Endothelial cell of umbilical vein (primary cell): ENCODE measurements at regions of chr16 and their contacts with region 1.

Region 1: GRCh38 chr16:48385272-48386150 is at the start of gene SIAH1:
- DNase-seq: peak; percentile 81
- H3K4me3 ChIP-seq: peak within 1 kb of the TSS; percentile 64 to 99 (median 92)
- H3K27ac ChIP-seq: peak within 1 kb of the TSS; percentile 92
- H3K4me1 ChIP-seq: peaks cover 18% of the 10 kb centered on the region
- H3K27me3 ChIP-seq: no peaks in the 10 kb centered on the region
- CTCF ChIP-seq: no peak
- POLR2A ChIP-seq: peak; percentile 77
- total RNA-seq, gene SIAH1: 19.9 and 21.3 TPM in 2 replicates

Region 2: GRCh38 chr16:48318630-48319029 is 66.9 kb before region 1 on chr16:
- CTCF ChIA-PET with region 1: no interaction called
- POLR2A ChIA-PET with region 1: no interaction called
- dilution Hi-C with region 1: no loop called
- intact Hi-C with region 1: loop called (anchors 2 kb)
- DNase-seq: peak; percentile 86
- H3K4me3 ChIP-seq: no peak overlapping the region
- H3K27ac ChIP-seq: peak overlapping the region; percentile 15
- H3K4me1 ChIP-seq: peaks cover 22% of the 10 kb centered on the region
- H3K27me3 ChIP-seq: no peaks in the 10 kb centered on the region
- CTCF ChIP-seq: no peak
- POLR2A ChIP-seq: no peak

Region 3: DNA sequence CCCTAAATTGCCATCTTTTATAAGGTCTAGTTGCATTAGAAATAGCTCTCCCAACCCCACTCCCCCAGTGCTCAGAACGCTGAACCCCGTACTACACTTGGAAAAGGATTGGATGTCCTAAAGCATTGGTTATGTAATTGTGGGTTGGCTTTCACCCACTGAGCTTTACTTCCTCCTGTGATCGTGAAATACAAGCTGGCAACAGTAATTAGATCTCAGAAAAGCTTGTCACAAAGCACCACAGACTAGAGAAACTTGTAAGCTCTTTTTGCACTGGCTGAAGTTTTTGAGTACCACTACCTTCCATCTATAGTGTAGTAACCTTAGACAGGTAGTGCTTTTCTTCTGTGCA is 54.7 kb before region 1 on chr16:
- CTCF ChIA-PET with region 1: no interaction called
- POLR2A ChIA-PET with region 1: no interaction called
- dilution Hi-C with region 1: no loop called
- intact Hi-C with region 1: no loop called
- DNase-seq: no peak
- H3K4me3 ChIP-seq: no peak overlapping the region
- H3K27ac ChIP-seq: no peak overlapping the region
- H3K4me1 ChIP-seq: peaks cover 2% of the 10 kb centered on the region
- H3K27me3 ChIP-seq: no peaks in the 10 kb centered on the region
- CTCF ChIP-seq: no peak
- POLR2A ChIP-seq: no peak

Region 4: GRCh38 chr16:48365581-48366164 is 19.8 kb before region 1 on chr16:
- CTCF ChIA-PET with region 1: interaction called, 12 read pairs
- POLR2A ChIA-PET with region 1: interaction called, 9 read pairs
- dilution Hi-C with region 1: no loop called
- intact Hi-C with region 1: loop called (anchors 1 kb)
- DNase-seq: peak; percentile 89
- H3K4me3 ChIP-seq: peak overlapping the region; percentile 57 to 83 (median 70)
- H3K27ac ChIP-seq: peak overlapping the region; percentile 66
- H3K4me1 ChIP-seq: peaks cover 14% of the 10 kb centered on the region
- H3K27me3 ChIP-seq: no peaks in the 10 kb centered on the region
- CTCF ChIP-seq: peak in 1 of 2 donors; percentile 18
- POLR2A ChIP-seq: peak; percentile 50

Region 5: DNA sequence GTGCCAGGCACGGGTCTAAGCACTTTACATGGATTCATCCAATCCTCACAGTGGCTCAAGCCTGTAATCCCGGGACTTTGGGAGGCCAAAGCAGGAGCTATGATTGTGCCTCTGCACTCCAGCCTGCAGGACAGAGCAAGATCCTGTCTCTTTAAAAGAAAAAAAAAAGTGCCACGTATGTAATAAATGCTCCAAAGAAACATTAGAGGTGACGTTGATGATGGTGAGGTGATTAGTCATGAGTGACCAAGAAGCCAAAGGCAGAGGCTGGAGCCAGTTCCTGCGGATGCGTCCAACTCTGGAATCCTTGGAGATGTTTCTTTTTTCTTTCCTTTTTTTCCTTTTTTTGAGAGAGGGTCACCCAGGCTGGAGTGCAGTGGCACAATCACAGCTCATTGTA is 59.1 kb after region 1 on chr16:
- CTCF ChIA-PET with region 1: no interaction called
- POLR2A ChIA-PET with region 1: no interaction called
- dilution Hi-C with region 1: no loop called
- intact Hi-C with region 1: loop called (anchors 2 kb)
- DNase-seq: peak; percentile 30
- H3K4me3 ChIP-seq: no peak overlapping the region
- H3K27ac ChIP-seq: peak overlapping the region; percentile 53
- H3K4me1 ChIP-seq: peaks cover 9% of the 10 kb centered on the region
- H3K27me3 ChIP-seq: no peaks in the 10 kb centered on the region
- CTCF ChIP-seq: no peak
- POLR2A ChIP-seq: no peak